Activated CD4-positive, alpha-beta T cell treated with anti-CD3 and anti-CD28 coated beads for 36 hours (primary cell): ENCODE measurements at regions of chr16 and their contacts with region 1.

Region 1: GRCh38 chr16:1378804-1379303 is 27.1 kb downstream of the GNPTG start:
- DNase-seq: peak; percentile 87
- ATAC-seq: peak; percentile 74
- H3K4me3 Mint-ChIP-seq: peak overlapping the region; percentile 87
- H3K27ac Mint-ChIP-seq: peak overlapping the region; percentile 91
- H3K4me1 Mint-ChIP-seq: peaks cover 17% of the 10 kb centered on the region
- H3K27me3 Mint-ChIP-seq: no peaks in the 10 kb centered on the region

Region 2: DNA sequence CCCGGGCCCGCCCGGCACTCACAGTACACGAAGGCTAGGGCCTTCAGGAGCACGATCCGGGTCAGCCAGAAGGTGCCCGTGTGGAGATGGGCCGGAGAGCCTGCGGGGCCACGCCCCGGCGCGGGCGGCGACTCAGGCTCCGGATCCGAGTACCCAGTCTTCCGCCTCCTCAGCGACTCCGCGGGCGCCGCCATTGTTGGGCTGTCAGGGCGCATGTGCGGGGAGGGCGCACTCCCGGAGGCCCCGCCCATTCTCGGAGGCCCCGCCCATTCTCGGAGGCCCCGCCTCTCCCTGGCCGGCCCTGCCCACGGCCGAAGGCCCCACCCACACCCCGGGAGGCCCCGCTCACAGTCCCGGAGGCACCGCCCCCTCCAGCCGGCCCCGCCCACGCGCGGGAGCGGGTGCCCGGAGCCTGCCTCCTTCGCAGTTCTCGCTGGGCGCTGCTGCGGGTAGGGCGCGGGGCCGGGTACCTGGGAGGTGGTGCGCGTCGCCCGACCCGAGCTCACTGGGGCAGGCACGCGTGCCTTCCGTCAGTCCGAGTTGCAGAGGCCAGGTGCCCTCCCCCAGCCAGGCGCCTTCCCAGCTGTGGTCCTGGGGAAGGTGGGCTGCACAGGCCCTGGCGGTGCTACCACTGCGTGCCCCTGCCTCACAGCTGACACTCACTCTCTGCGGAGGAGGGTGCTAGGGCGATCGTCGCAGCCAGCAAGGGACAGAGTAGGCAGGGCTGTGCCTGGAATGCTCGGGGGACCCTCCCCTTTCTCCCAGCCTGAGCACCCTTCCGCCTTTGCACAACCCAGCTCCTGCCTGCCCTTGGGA is 407.9 kb before region 1 on chr16 and contains the start of gene LMF1:
- CTCF ChIA-PET with region 1: no interaction called
- POLR2A ChIA-PET with region 1: no interaction called
- intact Hi-C with region 1: loop called in 1 of 2 experiments (anchors 1 kb)
- DNase-seq: peak; percentile 98
- ATAC-seq: peak; percentile 93
- H3K4me3 Mint-ChIP-seq: peak within 1 kb of the TSS; percentile 76
- H3K27ac Mint-ChIP-seq: peak within 1 kb of the TSS; percentile 78
- H3K4me1 Mint-ChIP-seq: peaks cover 15% of the 10 kb centered on the region
- H3K27me3 Mint-ChIP-seq: no peaks in the 10 kb centered on the region
- total RNA-seq, gene LMF1: 9.5 to 12.2 TPM

Region 3: GRCh38 chr16:1351582-1352362 is 27.1 kb before region 1 on chr16 and contains the starts of genes GNPTG and TSR3:
- CTCF ChIA-PET with region 1: no interaction called
- POLR2A ChIA-PET with region 1: no interaction called
- intact Hi-C with region 1: loop called in 1 of 2 experiments (anchors 1 kb)
- DNase-seq: peak; percentile 91
- ATAC-seq: peak; percentile 87
- H3K4me3 Mint-ChIP-seq: peak within 1 kb of the TSS; percentile 85
- H3K27ac Mint-ChIP-seq: peak within 1 kb of the TSS; percentile 79
- H3K4me1 Mint-ChIP-seq: peaks cover 37% of the 10 kb centered on the region
- H3K27me3 Mint-ChIP-seq: no peaks in the 10 kb centered on the region
- total RNA-seq, gene GNPTG: 16.3 to 17.4 TPM
- total RNA-seq, gene TSR3: 37.6 to 58.7 TPM

Region 4: GRCh38 chr16:1395444-1396031 is 16.7 kb after region 1 on chr16:
- CTCF ChIA-PET with region 1: no interaction called
- POLR2A ChIA-PET with region 1: no interaction called
- intact Hi-C with region 1: no loop called
- DNase-seq: no peak
- ATAC-seq: no peak
- H3K4me3 Mint-ChIP-seq: no peak overlapping the region
- H3K27ac Mint-ChIP-seq: no peak overlapping the region
- H3K4me1 Mint-ChIP-seq: no peaks in the 10 kb centered on the region
- H3K27me3 Mint-ChIP-seq: no peaks in the 10 kb centered on the region

Region 5: DNA sequence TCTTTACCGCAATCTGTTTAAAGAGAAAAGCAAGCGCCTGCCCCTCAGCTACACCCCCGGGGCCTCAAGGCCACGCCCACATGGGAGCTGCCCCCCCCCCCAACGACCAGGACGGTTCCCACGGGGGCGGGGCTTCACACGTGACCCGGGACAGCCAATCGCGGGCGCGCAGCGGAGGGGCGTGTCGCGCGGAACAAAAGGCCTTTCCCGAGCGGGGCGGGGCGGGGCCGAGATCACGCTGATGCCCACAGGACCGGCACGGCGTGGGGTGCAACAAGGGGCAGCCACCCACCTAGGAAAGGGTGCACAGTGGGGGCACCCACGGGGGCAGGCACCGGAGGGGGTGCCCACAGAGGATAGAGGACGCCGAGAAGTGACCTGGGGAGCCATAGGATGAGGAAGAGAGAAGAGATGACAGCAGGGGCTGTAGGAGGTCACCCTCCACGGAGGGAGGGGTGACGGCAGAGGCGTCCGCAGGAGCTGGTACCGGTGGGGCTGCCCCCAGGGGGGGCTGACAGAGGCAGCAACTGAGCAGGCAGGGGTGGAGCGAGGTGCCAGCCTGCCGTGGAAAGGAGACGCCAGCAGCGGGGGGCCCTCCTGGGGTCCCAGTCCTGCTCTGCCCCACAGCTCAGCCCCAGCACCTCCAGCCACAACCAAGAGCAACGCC is 29.4 kb after region 1 on chr16:
- CTCF ChIA-PET with region 1: interaction called, 3 read pairs
- POLR2A ChIA-PET with region 1: interaction called, 5 read pairs
- intact Hi-C with region 1: loop called (anchors 1 to 5 kb)
- DNase-seq: peak; percentile 95
- ATAC-seq: peak; percentile 94
- H3K4me3 Mint-ChIP-seq: peak overlapping the region; percentile 63
- H3K27ac Mint-ChIP-seq: no peak overlapping the region
- H3K4me1 Mint-ChIP-seq: peaks cover 18% of the 10 kb centered on the region
- H3K27me3 Mint-ChIP-seq: no peaks in the 10 kb centered on the region

Region 6: GRCh38 chr16:1474796-1475551 is 96.1 kb after region 1 on chr16 and contains the start of gene CLCN7:
- CTCF ChIA-PET with region 1: interaction called, 4 read pairs
- POLR2A ChIA-PET with region 1: no interaction called
- intact Hi-C with region 1: loop called in 1 of 2 experiments (anchors 1 kb)
- DNase-seq: peak; percentile 95
- ATAC-seq: peak; percentile 91
- H3K4me3 Mint-ChIP-seq: peak within 1 kb of the TSS; percentile 73
- H3K27ac Mint-ChIP-seq: peak within 1 kb of the TSS; percentile 81
- H3K4me1 Mint-ChIP-seq: peaks cover 22% of the 10 kb centered on the region
- H3K27me3 Mint-ChIP-seq: no peaks in the 10 kb centered on the region
- total RNA-seq, gene CLCN7: 29.9 to 33.7 TPM

Region 7: GRCh38 chr16:1705688-1706385 is 327.0 kb after region 1 on chr16 and contains the start of gene MAPK8IP3:
- CTCF ChIA-PET with region 1: no interaction called
- POLR2A ChIA-PET with region 1: no interaction called
- intact Hi-C with region 1: loop called in 1 of 2 experiments (anchors 1 kb)
- DNase-seq: peak; percentile 96
- ATAC-seq: peak; percentile 80
- H3K4me3 Mint-ChIP-seq: peak within 1 kb of the TSS; percentile 92
- H3K27ac Mint-ChIP-seq: peak within 1 kb of the TSS; percentile 90
- H3K4me1 Mint-ChIP-seq: peaks cover 32% of the 10 kb centered on the region
- H3K27me3 Mint-ChIP-seq: no peaks in the 10 kb centered on the region
- total RNA-seq, gene MAPK8IP3: 56.7 to 57.6 TPM

Region 8: GRCh38 chr16:1959269-1960049 is 580.6 kb after region 1 on chr16 and contains the start of gene NDUFB10:
- CTCF ChIA-PET with region 1: no interaction called
- POLR2A ChIA-PET with region 1: no interaction called
- intact Hi-C with region 1: no loop called
- DNase-seq: peak; percentile 96
- ATAC-seq: peak; percentile 77
- H3K4me3 Mint-ChIP-seq: peak within 1 kb of the TSS; percentile 96
- H3K27ac Mint-ChIP-seq: peak within 1 kb of the TSS; percentile 95
- H3K4me1 Mint-ChIP-seq: peaks cover 34% of the 10 kb centered on the region
- H3K27me3 Mint-ChIP-seq: no peaks in the 10 kb centered on the region
- total RNA-seq, gene NDUFB10: 113 to 118 TPM